ENCODE measurements at regions of chr13 and their contacts with region 1.

Region 1: DNA sequence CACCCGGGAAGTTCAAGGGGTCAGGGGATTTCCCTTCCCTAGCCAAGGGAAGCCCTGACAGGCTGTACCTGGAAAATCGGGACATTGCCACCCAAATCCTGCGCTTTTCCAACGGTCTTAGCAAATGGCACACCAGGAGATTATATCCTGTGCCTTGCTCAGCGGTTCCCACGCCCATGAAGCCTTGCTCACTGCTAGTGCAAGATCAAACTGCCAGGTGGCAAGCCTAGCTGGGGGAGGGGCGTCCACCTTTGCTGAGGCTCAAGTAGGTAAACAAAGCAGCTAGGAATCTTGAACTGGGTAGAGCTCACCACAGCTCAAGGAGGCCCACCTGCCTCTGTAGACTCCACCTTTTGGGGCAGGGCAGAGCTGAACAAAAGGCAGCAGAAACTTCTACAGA is 1794.5 kb downstream of the PCDH9 start:
- DNase-seq: no peak
- H3K4me3 ChIP-seq: no peak overlapping the region
- H3K27ac ChIP-seq: no peak overlapping the region
- H3K4me1 ChIP-seq: no peaks in the 10 kb centered on the region
- H3K27me3 ChIP-seq: no peaks in the 10 kb centered on the region
- CTCF ChIP-seq: no peak
- EP300 ChIP-seq: no peak
- POLR2A ChIP-seq: no peak

Region 2: DNA sequence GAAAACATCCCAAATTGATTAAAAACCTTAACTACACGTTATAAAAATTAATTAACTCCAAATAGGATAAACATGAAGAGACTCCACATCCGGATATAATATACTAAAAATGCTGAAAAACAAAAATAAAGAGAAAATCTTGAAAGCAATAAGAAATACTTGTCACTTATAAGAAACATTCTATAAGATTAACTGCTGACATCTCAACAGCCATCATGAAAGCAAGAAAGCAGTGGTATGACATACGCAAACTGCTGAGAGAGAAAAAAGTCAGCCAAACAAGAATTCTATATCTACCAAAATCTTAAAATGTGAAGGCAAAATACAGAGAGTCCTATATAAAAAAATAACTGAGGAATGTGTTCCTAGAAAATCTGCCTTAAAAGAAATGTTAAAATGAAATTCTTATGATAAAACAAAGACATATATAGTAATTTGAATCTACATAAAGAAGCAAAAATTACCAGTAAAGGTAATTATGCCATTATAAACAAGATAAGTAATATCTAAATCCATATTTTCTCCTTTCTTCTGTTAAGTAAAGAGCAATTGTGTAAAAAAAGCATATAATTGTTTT is 56.6 kb before region 1 on chr13:
- in situ Hi-C with region 1: no loop called
- intact Hi-C with region 1: loop called (anchors 2 kb)
- DNase-seq: no peak
- H3K4me3 ChIP-seq: no peak overlapping the region
- H3K27ac ChIP-seq: no peak overlapping the region
- H3K4me1 ChIP-seq: no peaks in the 10 kb centered on the region
- H3K27me3 ChIP-seq: no peaks in the 10 kb centered on the region
- CTCF ChIP-seq: no peak
- EP300 ChIP-seq: no peak
- POLR2A ChIP-seq: no peak